Activated T-helper 1 cell treated with anti-CD3 and anti-CD28 coated beads, Interleukin-12 subunit alpha, Interleukin-12 subunit beta, Interleukin-2, Interleukin-4 antibody, amounts not matched to agents 30 ng/mL and 10 ng/mL and 1 ng/mL, durations not matched to agents 14 hours and 24 hours and 36 hours (primary cell): ENCODE measurements at regions of chr16 and their contacts with region 1.

Region 1: GRCh38 chr16:29862884-29863668 is at the start of gene CDIPT:
- DNase-seq: peak; percentile 90
- H3K4me3 Mint-ChIP-seq: peak within 1 kb of the TSS; percentile 97
- H3K27ac Mint-ChIP-seq: peak within 1 kb of the TSS; percentile 100
- H3K4me1 Mint-ChIP-seq: peaks cover 24% of the 10 kb centered on the region
- H3K27me3 Mint-ChIP-seq: no peaks in the 10 kb centered on the region
- total RNA-seq, gene CDIPT: 83.7 and 85.5 TPM in 2 replicates

Region 2: GRCh38 chr16:29790183-29790952 is 72.7 kb before region 1 on chr16 and contains the start of gene KIF22:
- intact Hi-C with region 1: loop called (anchors 1 kb)
- DNase-seq: peak; percentile 100
- H3K4me3 Mint-ChIP-seq: peak within 1 kb of the TSS; percentile 99
- H3K27ac Mint-ChIP-seq: peak within 1 kb of the TSS; percentile 97
- H3K4me1 Mint-ChIP-seq: peaks cover 44% of the 10 kb centered on the region
- H3K27me3 Mint-ChIP-seq: no peaks in the 10 kb centered on the region
- total RNA-seq, gene KIF22: 134 and 140 TPM in 2 replicates

Region 3: DNA sequence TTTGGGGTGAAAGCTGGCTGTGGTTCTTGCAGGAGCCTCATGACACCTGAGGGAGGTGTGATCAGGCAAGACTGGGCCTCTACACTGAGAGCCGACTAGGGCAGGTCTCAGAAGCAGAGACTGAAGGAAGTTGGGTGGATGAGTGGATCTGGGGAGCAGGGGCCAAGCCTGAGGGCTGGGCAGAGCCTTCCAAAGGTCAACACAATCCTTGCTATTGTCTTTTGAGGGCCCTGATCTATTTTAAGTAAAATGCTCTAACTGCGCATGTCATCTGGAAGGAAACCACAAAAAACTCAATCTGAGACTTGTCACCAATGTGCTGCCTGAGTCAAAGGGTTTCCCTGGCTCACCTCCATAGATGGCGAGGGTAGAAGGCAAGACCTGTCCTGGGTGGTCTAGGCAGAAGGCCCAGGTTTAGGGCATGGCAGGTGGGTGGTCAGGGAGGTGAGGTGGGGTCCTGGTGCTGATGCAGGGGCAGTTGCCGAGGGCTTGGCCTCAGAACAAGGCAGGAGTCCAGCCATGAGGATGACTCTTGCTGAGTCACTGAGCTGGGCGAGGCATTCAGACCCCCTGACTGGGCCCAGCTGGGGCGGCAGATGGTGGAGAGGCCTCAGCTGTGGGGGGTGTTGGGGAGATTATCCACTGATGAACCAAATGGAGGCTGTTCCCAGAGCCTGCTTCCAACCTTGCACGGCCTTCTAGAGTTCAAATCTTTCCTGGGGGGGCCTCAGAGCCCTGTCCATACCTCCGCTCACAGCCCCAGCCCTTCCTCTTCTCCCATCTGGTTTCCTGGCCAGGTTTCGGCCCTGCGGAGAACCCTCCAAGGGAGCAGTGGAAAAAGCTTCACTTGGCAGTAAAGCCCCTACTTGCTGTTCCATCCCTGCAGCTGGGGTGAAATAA is 37.7 kb before region 1 on chr16:
- intact Hi-C with region 1: loop called (anchors 1 kb)
- DNase-seq: peak; percentile 50
- H3K4me3 Mint-ChIP-seq: peak overlapping the region; percentile 68
- H3K27ac Mint-ChIP-seq: peak overlapping the region; percentile 85
- H3K4me1 Mint-ChIP-seq: peaks cover 42% of the 10 kb centered on the region
- H3K27me3 Mint-ChIP-seq: no peaks in the 10 kb centered on the region

Region 4: DNA sequence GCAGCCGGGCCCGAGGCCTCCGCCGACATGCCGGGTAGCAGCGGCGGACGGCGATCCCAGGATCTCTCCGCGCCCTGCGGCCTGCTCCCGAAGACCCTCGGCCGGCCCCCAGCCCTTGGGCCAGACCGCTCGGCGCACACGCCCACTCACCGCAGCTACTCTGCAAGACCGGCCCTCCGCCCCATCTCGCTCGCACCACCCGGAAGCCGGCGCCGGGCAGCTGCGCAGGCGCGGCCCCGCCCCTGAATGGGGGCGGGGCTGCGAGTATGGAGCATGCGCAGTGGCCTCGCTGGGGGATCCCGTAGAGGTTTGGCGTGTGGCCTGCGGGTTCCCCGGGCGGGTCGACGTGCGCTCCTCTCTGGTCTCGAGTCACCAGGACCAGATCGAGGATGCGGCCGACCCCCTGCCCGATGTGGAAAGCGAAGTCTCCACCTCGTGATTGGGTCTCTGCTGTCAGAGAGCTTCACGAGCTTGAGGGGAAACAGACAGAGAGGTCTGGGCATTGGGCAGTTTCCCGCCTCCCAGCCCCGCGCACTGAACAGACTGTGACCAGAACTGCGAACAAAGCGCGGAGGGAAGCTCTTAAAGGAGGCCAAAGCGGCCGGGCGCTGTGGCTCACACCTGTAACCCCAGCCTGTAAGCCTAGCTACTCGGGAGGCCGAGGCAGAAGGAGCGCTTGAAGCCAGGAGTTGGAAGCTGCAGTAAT is 63.1 kb after region 1 on chr16 and contains the start of gene KCTD13:
- intact Hi-C with region 1: loop called (anchors 1 kb)
- DNase-seq: peak; percentile 93
- H3K4me3 Mint-ChIP-seq: peak within 1 kb of the TSS; percentile 94
- H3K27ac Mint-ChIP-seq: peak within 1 kb of the TSS; percentile 95
- H3K4me1 Mint-ChIP-seq: peaks cover 31% of the 10 kb centered on the region
- H3K27me3 Mint-ChIP-seq: no peaks in the 10 kb centered on the region
- total RNA-seq, gene KCTD13: 53.7 and 58.2 TPM in 2 replicates

Region 5: DNA sequence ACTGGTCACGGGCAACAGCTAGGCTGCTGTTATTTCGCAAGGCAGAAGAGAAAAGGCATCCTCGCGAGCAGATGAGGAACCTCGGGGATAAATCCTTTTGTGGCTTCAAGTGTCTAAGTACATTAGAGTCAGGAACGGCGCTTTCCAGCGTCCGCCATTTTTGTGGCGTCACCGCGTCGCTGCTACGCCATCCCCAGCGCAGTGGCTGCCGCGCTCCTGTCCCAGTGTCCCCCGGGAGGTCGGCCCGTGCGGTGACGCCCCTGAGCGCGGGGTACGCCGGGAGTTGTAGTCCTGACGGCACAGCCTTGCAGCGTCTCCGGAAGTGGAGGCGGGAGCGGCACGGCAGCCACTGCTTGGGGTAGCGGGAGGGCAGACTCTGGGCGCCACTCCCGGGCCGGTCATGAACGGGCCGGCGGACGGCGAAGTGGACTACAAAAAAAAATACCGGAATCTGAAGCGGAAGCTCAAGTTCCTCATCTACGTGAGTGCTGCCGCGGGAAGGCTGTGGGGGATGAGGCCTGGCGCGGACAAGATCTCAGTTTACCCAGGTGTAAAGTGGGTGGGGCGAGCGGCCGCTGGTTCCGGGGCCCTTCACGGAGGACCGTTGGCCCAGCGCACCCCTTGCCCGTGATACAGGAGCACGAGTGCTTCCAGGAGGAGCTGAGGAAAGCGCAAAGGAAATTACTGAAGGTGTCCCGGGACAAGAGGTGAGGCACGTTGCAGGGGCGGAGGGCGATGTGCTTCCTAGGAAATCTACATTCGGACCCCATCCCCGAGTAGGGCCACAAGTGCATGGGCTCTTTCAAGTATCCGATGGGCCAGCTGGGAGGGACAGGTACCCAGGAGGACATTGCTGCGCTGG is 133.1 kb after region 1 on chr16 and contains the start of gene INO80E:
- intact Hi-C with region 1: loop called (anchors 1 kb)
- DNase-seq: peak; percentile 99
- H3K4me3 Mint-ChIP-seq: peak within 1 kb of the TSS; percentile 98
- H3K27ac Mint-ChIP-seq: peak within 1 kb of the TSS; percentile 96
- H3K4me1 Mint-ChIP-seq: peaks cover 39% of the 10 kb centered on the region
- H3K27me3 Mint-ChIP-seq: no peaks in the 10 kb centered on the region
- total RNA-seq, gene INO80E: 128 and 137 TPM in 2 replicates

Region 6: DNA sequence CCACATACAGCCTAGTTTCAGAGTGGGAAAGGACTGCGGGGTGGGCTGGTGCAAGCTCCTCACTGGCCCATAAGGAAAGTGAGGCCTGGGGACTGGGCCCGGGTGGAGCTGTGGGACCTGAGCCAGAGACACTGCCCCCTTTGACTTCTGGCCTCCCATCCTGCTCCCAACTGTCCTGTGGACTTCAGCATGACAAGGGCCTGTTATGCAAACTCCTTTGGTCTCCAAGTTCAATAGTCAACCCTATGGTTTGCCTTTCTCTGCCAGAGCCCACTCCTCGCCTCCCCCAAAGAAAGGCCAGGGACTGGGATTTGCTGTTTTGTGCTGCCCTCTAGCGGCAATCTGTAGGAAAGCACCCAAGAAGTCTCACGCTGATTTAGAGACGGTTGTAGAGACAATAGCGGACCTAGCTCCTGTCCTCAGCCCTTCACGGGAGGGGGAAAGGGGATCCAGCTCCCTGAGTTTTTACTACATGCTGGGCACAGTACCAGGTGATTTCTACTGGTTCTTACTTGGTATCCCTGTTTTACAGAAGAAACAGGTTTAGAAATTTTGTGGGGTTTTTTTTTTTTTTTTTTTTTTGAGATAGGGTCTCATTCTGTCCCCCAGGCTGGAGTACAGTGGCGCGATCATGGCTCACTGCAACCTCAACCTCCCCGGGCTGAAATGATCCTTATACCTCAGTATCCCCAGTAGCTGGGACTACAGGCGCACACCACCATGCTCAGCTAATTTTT is 169.2 kb after region 1 on chr16:
- intact Hi-C with region 1: no loop called
- DNase-seq: peak; percentile 61
- H3K4me3 Mint-ChIP-seq: no peak overlapping the region
- H3K27ac Mint-ChIP-seq: no peak overlapping the region
- H3K4me1 Mint-ChIP-seq: peaks cover 16% of the 10 kb centered on the region
- H3K27me3 Mint-ChIP-seq: peaks cover 48% of the 10 kb centered on the region

Region 7: DNA sequence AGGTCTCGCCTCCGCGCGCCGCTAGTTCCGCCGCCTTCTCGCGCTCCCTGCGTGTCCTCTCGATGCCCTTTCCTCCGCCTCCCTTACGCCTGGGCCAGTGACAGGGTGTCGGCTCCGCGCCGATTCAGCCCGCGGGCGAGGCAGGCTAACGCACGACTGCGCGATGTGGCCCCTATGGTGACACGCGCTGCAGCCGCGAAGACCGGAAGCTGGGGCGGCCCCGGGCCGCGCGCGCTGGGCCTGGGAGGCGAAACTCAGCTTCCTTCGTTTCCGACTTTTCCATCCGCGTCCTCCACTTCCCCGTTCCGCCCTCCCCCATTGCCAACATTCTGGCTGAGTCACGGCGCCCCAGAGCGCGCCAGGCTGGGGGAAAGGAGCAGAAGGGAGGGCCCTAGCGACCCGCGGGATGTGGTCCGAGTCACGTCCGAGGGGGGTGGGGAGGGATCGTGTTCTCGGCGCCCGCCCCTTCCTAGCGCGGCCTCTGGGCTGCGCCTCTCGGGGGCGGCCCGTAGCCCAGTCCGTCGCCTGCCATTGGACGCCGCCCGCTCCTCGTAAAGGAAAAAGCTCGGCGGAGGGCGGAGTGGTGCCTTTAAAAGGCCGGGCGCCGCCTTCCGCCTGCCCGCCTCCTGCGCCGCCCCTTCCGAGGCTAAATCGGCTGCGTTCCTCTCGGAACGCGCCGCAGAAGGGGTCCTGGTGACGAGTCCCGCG is 202.2 kb after region 1 on chr16 and contains the start of gene ALDOA:
- intact Hi-C with region 1: loop called (anchors 1 kb)
- DNase-seq: peak; percentile 95
- H3K4me3 Mint-ChIP-seq: peak within 1 kb of the TSS; percentile 99
- H3K27ac Mint-ChIP-seq: peak within 1 kb of the TSS; percentile 95
- H3K4me1 Mint-ChIP-seq: peaks cover 25% of the 10 kb centered on the region
- H3K27me3 Mint-ChIP-seq: peaks cover 1% of the 10 kb centered on the region
- total RNA-seq, gene ALDOA: 1,715 and 1,718 TPM in 2 replicates